Activated T-helper 2 cell treated with anti-CD3 and anti-CD28 coated beads, Interferon-gamma antibody, Interleukin-2, Interleukin-4, amounts not matched to agents 10 μg/mL and 5 μg/mL and 100 μg/mL, durations not matched to agents 14 hours and 24 hours and 36 hours (primary cell): ENCODE measurements at regions of chr12 and their contacts with region 1.

Region 1: GRCh38 chr12:62728741-62729140 is 206.2 kb downstream of the PPM1H start:
- DNase-seq: no peak
- H3K4me3 Mint-ChIP-seq: no peak overlapping the region
- H3K27ac Mint-ChIP-seq: no peak overlapping the region
- H3K4me1 Mint-ChIP-seq: peaks cover 3% of the 10 kb centered on the region
- H3K27me3 Mint-ChIP-seq: peaks cover 13% of the 10 kb centered on the region

Region 2: DNA sequence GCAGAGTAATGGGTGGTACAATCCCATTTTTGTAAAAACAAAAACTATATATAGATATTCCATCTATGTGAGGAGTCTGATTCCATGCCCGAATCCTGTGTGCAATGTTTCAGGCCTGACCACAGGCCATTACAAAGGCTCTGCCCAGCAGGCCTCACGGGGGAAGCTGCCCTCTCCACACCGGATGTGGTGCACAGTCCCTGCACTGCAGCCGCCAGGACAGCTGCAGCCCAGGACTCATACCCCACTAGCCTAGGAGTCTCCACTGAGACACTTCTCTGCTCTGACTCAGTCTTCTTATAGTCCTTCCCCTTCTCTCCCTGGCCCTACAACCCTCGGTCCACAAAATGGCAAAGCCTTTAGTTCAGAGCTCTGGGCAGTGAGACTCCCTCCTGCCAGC is 15.8 kb after region 1 on chr12:
- intact Hi-C with region 1: no loop called
- DNase-seq: no peak
- H3K4me3 Mint-ChIP-seq: no peak overlapping the region
- H3K27ac Mint-ChIP-seq: no peak overlapping the region
- H3K4me1 Mint-ChIP-seq: no peaks in the 10 kb centered on the region
- H3K27me3 Mint-ChIP-seq: peaks cover 5% of the 10 kb centered on the region

Region 3: DNA sequence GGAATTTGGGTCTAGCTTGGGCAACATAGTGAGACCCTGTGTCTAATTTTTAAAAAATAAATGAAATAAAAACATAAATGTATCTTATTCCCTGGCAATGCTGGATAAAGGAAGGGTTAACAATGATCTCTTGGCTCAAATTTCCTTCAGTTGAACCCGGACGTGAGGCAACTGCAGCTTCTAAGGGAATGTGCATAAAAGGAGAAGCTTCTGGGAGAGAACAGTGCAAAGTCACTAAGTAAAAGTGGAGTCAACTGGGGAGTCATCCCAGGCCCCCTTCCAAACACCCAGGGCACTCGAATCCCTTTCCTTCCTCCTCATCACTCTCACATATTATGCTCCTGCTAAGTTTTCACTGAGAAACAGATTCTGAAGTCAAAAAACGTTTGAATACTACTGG is 58.9 kb after region 1 on chr12:
- intact Hi-C with region 1: loop called (anchors 1 kb)
- DNase-seq: no peak
- H3K4me3 Mint-ChIP-seq: no peak overlapping the region
- H3K27ac Mint-ChIP-seq: no peak overlapping the region
- H3K4me1 Mint-ChIP-seq: peaks cover 12% of the 10 kb centered on the region
- H3K27me3 Mint-ChIP-seq: peaks cover 20% of the 10 kb centered on the region